PC-9 (cell line): ENCODE measurements at regions of chr21 and their contacts with region 1.

Region 1: DNA sequence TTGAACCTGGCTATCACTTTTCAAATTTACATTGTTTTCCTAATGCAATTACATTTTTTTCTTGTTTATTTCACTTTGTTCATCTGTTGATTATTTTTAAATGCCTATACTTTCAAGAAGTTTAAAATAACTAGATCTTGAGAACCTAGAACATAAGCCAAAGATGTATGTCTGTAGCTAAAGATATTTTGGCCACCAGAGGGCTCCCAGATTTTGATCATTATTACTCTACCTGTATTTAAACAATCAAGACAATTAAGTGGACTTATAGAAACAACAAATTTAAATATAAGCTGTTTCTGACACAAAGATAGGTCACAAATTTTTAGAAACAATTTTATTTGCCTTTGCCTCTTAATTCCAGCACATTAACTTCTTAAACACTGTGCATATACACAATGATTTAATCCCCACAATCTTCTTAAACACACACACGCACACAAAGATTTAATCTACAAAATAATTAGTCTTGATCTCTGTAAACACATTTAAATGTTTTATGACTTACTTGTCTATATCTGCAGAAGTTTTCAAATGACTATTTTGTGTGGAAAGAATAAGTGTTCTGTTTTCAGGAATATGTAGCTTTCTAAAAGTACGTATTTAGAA is 380.0 kb downstream of the DSCAM start:
- DNase-seq: no peak
- H3K4me3 ChIP-seq: no peak overlapping the region
- H3K27ac ChIP-seq: no peak overlapping the region
- H3K4me1 ChIP-seq: no peaks in the 10 kb centered on the region
- H3K27me3 ChIP-seq: no peaks in the 10 kb centered on the region; the same call in 1 of the 2 replicates
- CTCF ChIP-seq: peak; percentile 63

Region 2: GRCh38 chr21:41068967-41069642 is 602.1 kb after region 1 on chr21:
- CTCF ChIA-PET with region 1: no interaction called
- POLR2A ChIA-PET with region 1: no interaction called
- intact Hi-C with region 1: loop called (anchors 5 kb)
- DNase-seq: peak in 1 of 2 experiments; percentile 45
- H3K4me3 ChIP-seq: no peak overlapping the region
- H3K27ac ChIP-seq: no peak overlapping the region
- H3K4me1 ChIP-seq: no peaks in the 10 kb centered on the region
- H3K27me3 ChIP-seq: peaks cover 77% of the 10 kb centered on the region
- CTCF ChIP-seq: peak; percentile 68

Region 3: DNA sequence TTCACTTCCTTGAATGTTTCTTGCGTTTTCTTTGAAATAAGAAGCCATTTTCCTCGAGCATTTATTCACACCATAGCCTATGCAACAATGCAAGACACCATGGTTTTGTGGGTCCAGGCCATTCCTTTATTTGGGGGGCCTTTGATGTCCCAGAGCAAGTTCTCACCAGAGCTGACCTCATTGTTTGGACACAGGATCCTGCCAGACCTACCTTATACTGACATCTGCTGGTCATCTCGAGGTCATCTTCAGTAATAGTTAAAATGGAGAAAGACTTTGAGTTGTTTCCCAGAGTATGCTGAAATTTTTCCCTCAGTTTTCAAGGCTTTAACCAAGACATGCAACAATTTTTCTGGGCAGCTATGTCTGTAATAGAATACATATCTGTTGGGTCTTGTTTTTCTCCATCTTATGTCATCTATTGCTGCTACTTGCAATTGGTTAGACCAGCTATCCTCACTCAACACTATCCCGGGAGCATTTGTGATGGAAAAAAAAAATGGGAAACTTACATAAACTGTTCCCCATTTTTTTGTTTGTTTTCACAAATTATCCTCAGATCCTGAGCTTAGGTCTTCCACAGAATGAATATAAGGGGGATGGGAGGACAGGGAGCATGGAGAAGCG is 667.0 kb after region 1 on chr21:
- CTCF ChIA-PET with region 1: no interaction called
- POLR2A ChIA-PET with region 1: no interaction called
- intact Hi-C with region 1: loop called (anchors 5 kb)
- DNase-seq: no peak
- H3K4me3 ChIP-seq: no peak overlapping the region
- H3K27ac ChIP-seq: no peak overlapping the region
- H3K4me1 ChIP-seq: no peaks in the 10 kb centered on the region
- H3K27me3 ChIP-seq: no peaks in the 10 kb centered on the region
- CTCF ChIP-seq: peak; percentile 63